ENCODE measurements at regions of chr12 and their contacts with region 1.

Region 1: GRCh38 chr12:57238854-57239554 is 9.5 kb downstream of the SHMT2 start:
- DNase-seq: peak in 1 of 2 experiments; percentile 98
- H3K4me3 ChIP-seq: peak overlapping the region; percentile 42 to 67 (median 54)
- H3K27ac ChIP-seq: no peak overlapping the region
- H3K4me1 ChIP-seq: peaks cover 6 to 68% (median 45%) of the 10 kb centered on the region in 4 experiments
- H3K27me3 ChIP-seq: peaks cover 59 to 80% (median 74%) of the 10 kb centered on the region in 4 experiments
- CTCF ChIP-seq: peak in 2 of 3 experiments; percentile 100; a peak in 3 of 4 replicates
- EP300 ChIP-seq: peak in 1 of 2 experiments; percentile 59; a peak in 1 of 3 replicates
- POLR2A ChIP-seq: peak in 1 of 2 experiments; percentile 24; a peak in 1 of 3 replicates
- RAD21 ChIP-seq: peak; percentile 85 to 91

Region 2: DNA sequence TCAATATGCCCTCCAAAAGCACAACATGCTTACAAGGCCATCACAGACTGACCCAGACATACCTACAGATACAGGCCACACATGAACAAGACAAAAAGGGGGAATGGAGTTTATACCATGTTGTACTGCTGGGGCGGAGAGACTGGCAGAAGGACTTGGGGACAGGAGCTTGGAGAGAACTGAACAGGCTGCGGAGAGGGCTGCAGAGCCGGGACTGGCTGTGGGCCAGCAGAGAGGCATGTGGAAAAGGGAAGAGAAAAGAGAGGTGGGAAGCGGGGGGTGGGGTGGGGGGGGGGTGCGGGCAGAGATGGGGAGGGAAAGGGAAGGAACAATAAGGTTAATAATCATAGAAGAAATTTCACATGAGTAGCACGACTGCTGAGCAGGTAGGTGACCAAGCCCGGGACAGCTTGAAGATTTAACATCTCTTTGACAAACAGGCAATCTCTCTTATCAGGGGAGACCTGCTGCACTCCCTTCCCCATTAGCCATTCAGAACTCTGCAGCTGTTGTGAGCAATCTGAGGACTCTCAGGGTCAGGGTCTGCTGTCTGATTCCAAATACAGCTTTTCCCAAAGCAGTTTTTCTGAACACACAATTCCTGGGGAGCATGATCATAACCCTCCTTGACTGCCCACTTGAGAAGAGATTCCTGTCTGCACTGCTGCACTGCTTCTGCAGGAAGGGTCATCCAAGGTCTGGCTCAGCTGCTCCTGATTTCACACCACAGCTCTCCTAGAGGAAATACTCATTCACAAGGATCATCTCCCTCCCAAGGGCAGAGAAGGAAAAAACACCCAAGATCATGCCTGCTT is 33.5 kb after region 1 on chr12:
- CTCF ChIA-PET with region 1: interaction called, 15 read pairs
- POLR2A ChIA-PET with region 1: no interaction called
- DNase-seq: no peak
- H3K4me3 ChIP-seq: no peak overlapping the region
- H3K27ac ChIP-seq: no peak overlapping the region
- H3K4me1 ChIP-seq: no peaks in the 10 kb centered on the region; a peak in 1 of 7 replicates
- H3K27me3 ChIP-seq: no peaks in the 10 kb centered on the region
- CTCF ChIP-seq: no peak
- EP300 ChIP-seq: no peak
- POLR2A ChIP-seq: no peak
- RAD21 ChIP-seq: no peak